Endothelial cell of umbilical vein (primary cell): ENCODE measurements at regions of chr16 and their contacts with region 1.

Region 1: GRCh38 chr16:75198135-75198600 is 8.8 kb downstream of the CTRB2 start:
- DNase-seq: no peak
- H3K4me3 ChIP-seq: no peak overlapping the region
- H3K27ac ChIP-seq: no peak overlapping the region
- H3K4me1 ChIP-seq: peaks cover 4% of the 10 kb centered on the region
- H3K27me3 ChIP-seq: peaks cover 5 to 7% of the 10 kb centered on the region in 2 experiments
- CTCF ChIP-seq: no peak
- POLR2A ChIP-seq: no peak

Region 2: GRCh38 chr16:75385507-75386152 is 187.5 kb after region 1 on chr16:
- CTCF ChIA-PET with region 1: interaction called, 24 read pairs
- POLR2A ChIA-PET with region 1: interaction called, 7 read pairs
- dilution Hi-C with region 1: no loop called
- intact Hi-C with region 1: loop called (anchors 1 kb)
- DNase-seq: peak; percentile 88
- H3K4me3 ChIP-seq: no peak overlapping the region
- H3K27ac ChIP-seq: peak overlapping the region; percentile 28
- H3K4me1 ChIP-seq: peaks cover 36% of the 10 kb centered on the region
- H3K27me3 ChIP-seq: no peaks in the 10 kb centered on the region
- CTCF ChIP-seq: peak; percentile 19 to 30
- POLR2A ChIP-seq: no peak

Region 3: GRCh38 chr16:75415169-75415905 is 217.2 kb after region 1 on chr16:
- CTCF ChIA-PET with region 1: interaction called, 18 read pairs
- POLR2A ChIA-PET with region 1: no interaction called
- dilution Hi-C with region 1: no loop called
- intact Hi-C with region 1: no loop called
- DNase-seq: no peak
- H3K4me3 ChIP-seq: no peak overlapping the region
- H3K27ac ChIP-seq: no peak overlapping the region
- H3K4me1 ChIP-seq: peaks cover 7% of the 10 kb centered on the region
- H3K27me3 ChIP-seq: no peaks in the 10 kb centered on the region
- CTCF ChIP-seq: no peak
- POLR2A ChIP-seq: no peak

Region 4: DNA sequence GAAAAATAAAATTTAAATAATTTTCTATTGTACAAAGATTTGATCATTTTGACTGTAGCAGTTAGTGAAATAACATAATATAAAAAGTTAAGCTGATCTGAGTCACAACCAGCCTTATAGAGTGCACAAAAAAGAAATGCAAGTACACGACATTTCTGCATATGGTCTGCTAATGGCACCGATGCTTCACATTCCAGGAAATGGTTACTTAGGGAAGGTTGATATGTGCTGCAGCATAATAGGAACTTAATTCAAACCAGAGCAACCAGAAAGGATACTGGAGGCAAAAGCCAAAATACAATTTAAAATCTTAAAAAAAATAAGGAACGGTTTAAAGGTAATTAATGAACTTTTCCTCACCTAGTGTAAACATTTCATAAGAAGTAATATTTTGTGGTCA is 245.1 kb after region 1 on chr16:
- CTCF ChIA-PET with region 1: interaction called, 11 read pairs
- POLR2A ChIA-PET with region 1: no interaction called
- dilution Hi-C with region 1: no loop called
- intact Hi-C with region 1: no loop called
- DNase-seq: no peak
- H3K4me3 ChIP-seq: no peak overlapping the region
- H3K27ac ChIP-seq: no peak overlapping the region
- H3K4me1 ChIP-seq: no peaks in the 10 kb centered on the region
- H3K27me3 ChIP-seq: no peaks in the 10 kb centered on the region
- CTCF ChIP-seq: no peak
- POLR2A ChIP-seq: no peak

Region 5: GRCh38 chr16:75471723-75472633 is 273.8 kb after region 1 on chr16:
- CTCF ChIA-PET with region 1: interaction called, 117 read pairs
- POLR2A ChIA-PET with region 1: no interaction called
- dilution Hi-C with region 1: no loop called
- intact Hi-C with region 1: no loop called
- DNase-seq: peak; percentile 67
- H3K4me3 ChIP-seq: no peak overlapping the region
- H3K27ac ChIP-seq: no peak overlapping the region
- H3K4me1 ChIP-seq: no peaks in the 10 kb centered on the region
- H3K27me3 ChIP-seq: no peaks in the 10 kb centered on the region
- CTCF ChIP-seq: peak; percentile 65 to 74
- POLR2A ChIP-seq: no peak

Region 6: GRCh38 chr16:75622761-75623605 is 424.8 kb after region 1 on chr16 and contains the start of gene ADAT1:
- CTCF ChIA-PET with region 1: interaction called, 10 read pairs
- POLR2A ChIA-PET with region 1: no interaction called
- dilution Hi-C with region 1: no loop called
- intact Hi-C with region 1: loop called (anchors 2 kb)
- DNase-seq: peak; percentile 99
- H3K4me3 ChIP-seq: peak within 1 kb of the TSS; percentile 49 to 96 (median 94)
- H3K27ac ChIP-seq: peak within 1 kb of the TSS; percentile 75
- H3K4me1 ChIP-seq: peaks cover 24% of the 10 kb centered on the region
- H3K27me3 ChIP-seq: no peaks in the 10 kb centered on the region
- CTCF ChIP-seq: no peak
- POLR2A ChIP-seq: peak; percentile 95
- total RNA-seq, gene ADAT1: 56.6 and 57.9 TPM in 2 replicates

Region 7: DNA sequence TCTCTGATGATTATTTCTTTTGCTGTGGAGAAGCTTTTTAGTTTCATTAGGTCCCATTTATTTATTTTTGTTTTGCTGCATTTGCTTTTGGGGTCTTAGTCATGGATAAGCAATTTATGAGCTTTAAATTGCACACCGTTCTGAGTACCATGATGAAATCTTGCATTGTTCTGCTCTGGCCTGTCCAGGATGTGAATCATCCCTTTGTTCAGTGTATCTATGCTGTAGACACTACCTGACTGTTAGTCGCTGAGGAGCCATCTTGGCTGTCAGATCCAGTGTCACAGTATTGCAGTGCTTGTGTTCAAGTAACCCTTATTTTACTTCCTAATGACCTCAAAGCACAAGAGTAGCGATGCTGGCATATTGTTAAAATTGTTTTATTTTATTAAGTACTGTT is 861.0 kb after region 1 on chr16:
- CTCF ChIA-PET with region 1: no interaction called
- POLR2A ChIA-PET with region 1: no interaction called
- dilution Hi-C with region 1: no loop called
- intact Hi-C with region 1: no loop called
- DNase-seq: no peak
- H3K4me3 ChIP-seq: no peak overlapping the region
- H3K27ac ChIP-seq: no peak overlapping the region
- H3K4me1 ChIP-seq: no peaks in the 10 kb centered on the region
- H3K27me3 ChIP-seq: no peaks in the 10 kb centered on the region
- CTCF ChIP-seq: no peak
- POLR2A ChIP-seq: no peak